Activated T-helper 2 cell treated with anti-CD3 and anti-CD28 coated beads, Interferon-gamma antibody, Interleukin-2, Interleukin-4, amounts not matched to agents 10 μg/mL and 5 μg/mL and 100 μg/mL, durations not matched to agents 14 hours and 24 hours and 36 hours (primary cell): ENCODE measurements at regions of chr4 and their contacts with region 1.

Region 1: GRCh38 chr4:68375667-68376559 is 26.0 kb upstream of the YTHDC1 start:
- DNase-seq: peak; percentile 21
- H3K4me3 Mint-ChIP-seq: peak overlapping the region; percentile 65
- H3K27ac Mint-ChIP-seq: no peak overlapping the region
- H3K4me1 Mint-ChIP-seq: peaks cover 20% of the 10 kb centered on the region
- H3K27me3 Mint-ChIP-seq: peaks cover 20% of the 10 kb centered on the region

Region 2: GRCh38 chr4:67983333-67983732 is 392.6 kb before region 1 on chr4:
- intact Hi-C with region 1: loop called (anchors 10 kb)
- DNase-seq: no peak
- H3K4me3 Mint-ChIP-seq: no peak overlapping the region
- H3K27ac Mint-ChIP-seq: no peak overlapping the region
- H3K4me1 Mint-ChIP-seq: no peaks in the 10 kb centered on the region
- H3K27me3 Mint-ChIP-seq: peaks cover 5% of the 10 kb centered on the region

Region 3: DNA sequence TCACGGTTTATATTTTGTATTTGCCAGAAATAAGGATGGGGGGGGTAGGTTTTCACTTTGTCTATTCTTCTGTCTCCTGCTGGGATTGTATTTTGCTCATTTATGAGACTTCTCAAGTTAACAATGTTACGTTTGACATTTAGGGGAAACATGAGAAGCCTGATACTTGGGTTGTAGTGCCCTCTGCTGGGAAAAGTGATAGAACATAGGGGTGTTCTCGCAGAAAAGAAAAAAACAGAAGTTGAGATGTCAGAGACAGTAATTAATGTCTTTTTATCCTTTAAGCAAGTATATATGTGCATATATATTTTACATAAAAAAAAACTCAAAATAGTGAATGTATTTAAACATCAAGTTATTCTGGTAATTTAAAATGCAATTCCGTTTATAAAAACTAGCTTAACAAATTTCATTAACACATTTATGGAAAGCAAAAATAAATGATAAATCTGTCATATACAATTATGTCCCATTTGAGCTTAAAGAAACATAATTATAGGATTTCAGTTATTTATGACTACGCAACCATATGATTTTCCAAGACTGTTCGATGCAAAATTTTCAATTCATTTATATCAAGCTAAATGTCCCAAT is 200.3 kb before region 1 on chr4:
- intact Hi-C with region 1: loop called (anchors 10 kb)
- DNase-seq: peak; percentile 18
- H3K4me3 Mint-ChIP-seq: no peak overlapping the region
- H3K27ac Mint-ChIP-seq: no peak overlapping the region
- H3K4me1 Mint-ChIP-seq: peaks cover 6% of the 10 kb centered on the region
- H3K27me3 Mint-ChIP-seq: peaks cover 4% of the 10 kb centered on the region

Region 4: GRCh38 chr4:68271851-68272756 is 103.8 kb before region 1 on chr4:
- intact Hi-C with region 1: loop called (anchors 1 kb)
- DNase-seq: no peak
- H3K4me3 Mint-ChIP-seq: peak overlapping the region; percentile 33
- H3K27ac Mint-ChIP-seq: no peak overlapping the region
- H3K4me1 Mint-ChIP-seq: peaks cover 12% of the 10 kb centered on the region
- H3K27me3 Mint-ChIP-seq: no peaks in the 10 kb centered on the region

Region 5: GRCh38 chr4:68349649-68350360 is 26.1 kb before region 1 on chr4 and contains the start of gene YTHDC1:
- intact Hi-C with region 1: loop called (anchors 2 kb)
- DNase-seq: peak; percentile 89
- H3K4me3 Mint-ChIP-seq: peak within 1 kb of the TSS; percentile 97
- H3K27ac Mint-ChIP-seq: peak within 1 kb of the TSS; percentile 97
- H3K4me1 Mint-ChIP-seq: peaks cover 31% of the 10 kb centered on the region
- H3K27me3 Mint-ChIP-seq: no peaks in the 10 kb centered on the region
- total RNA-seq, gene YTHDC1: 79.9 and 83.6 TPM in 2 replicates

Region 6: DNA sequence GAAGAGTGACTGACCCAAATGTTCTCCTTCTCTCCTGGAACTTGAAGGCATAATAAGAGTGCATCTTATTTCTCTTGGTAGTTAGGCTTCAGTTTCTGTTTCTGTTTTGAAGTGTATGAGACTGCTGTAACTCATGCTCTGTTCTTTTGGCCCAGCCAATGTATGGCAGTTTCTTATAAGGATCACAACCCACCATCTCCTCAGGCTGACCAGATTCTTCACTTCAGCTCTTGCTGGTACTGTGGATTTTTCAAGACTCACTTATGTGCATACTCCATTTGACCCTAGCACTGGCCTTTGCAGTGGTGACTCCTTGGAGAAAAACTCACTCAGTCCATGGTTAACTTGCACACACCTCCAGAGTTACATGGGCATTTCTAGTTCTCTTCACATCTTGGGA is 16.4 kb before region 1 on chr4:
- intact Hi-C with region 1: loop called (anchors 2 kb)
- DNase-seq: no peak
- H3K4me3 Mint-ChIP-seq: peak overlapping the region; percentile 28
- H3K27ac Mint-ChIP-seq: peak overlapping the region; percentile 66
- H3K4me1 Mint-ChIP-seq: peaks cover 11% of the 10 kb centered on the region
- H3K27me3 Mint-ChIP-seq: peaks cover 11% of the 10 kb centered on the region